Activated CD4-positive, alpha-beta memory T cell treated with anti-CD3 and anti-CD28 coated beads for 36 hours (primary cell): ENCODE measurements at regions of chr19 and their contacts with region 1.

Region 1: DNA sequence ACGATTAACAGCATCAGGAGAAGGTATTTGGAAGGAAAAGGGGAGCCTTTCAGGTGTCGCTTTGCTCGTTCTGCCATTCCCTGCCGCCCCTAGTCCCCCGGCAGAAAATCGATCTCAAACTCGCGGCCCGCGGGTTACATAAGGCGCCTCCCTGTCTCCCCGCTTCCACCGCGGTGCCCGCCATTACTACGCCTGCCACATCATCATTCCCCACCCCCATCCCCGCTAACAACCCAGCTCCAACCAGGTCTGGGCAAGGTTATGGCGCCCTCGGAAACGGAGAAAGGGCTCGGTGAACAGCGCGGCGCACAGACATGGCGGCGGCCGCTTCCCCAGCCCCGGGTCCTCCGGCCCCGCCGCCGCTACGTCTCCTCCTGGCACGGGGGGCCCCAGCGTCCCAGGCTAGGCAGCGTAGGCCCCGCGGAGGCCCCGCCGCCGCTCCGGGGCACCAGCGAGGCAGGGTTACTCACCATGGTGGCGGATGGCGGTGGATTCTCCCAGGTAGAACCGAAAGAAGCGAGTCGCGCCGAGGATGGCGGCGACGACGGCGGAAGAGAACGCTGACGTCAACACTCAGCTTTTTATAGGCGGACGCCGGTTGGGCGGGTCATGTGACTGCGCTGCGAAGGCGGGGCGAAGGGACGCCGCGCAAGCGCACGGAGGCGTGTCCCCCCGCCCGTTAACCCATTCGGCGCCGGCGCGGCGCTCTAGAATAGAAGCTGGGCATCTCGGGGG is at the start of gene EEF2:
- DNase-seq: peak; percentile 90
- H3K4me3 Mint-ChIP-seq: peak within 1 kb of the TSS; percentile 96
- H3K27ac Mint-ChIP-seq: peak within 1 kb of the TSS; percentile 95
- H3K4me1 Mint-ChIP-seq: peaks cover 37% of the 10 kb centered on the region
- H3K27me3 Mint-ChIP-seq: no peaks in the 10 kb centered on the region
- total RNA-seq, gene EEF2: 3,113 to 3,225 TPM

Region 2: GRCh38 chr19:3505598-3506383 is 479.3 kb before region 1 on chr19 and contains the start of gene FZR1:
- CTCF ChIA-PET with region 1: no interaction called
- POLR2A ChIA-PET with region 1: no interaction called
- intact Hi-C with region 1: loop called (anchors 5 kb)
- DNase-seq: peak; percentile 100
- H3K4me3 Mint-ChIP-seq: peak within 1 kb of the TSS; percentile 93
- H3K27ac Mint-ChIP-seq: peak within 1 kb of the TSS; percentile 93
- H3K4me1 Mint-ChIP-seq: peaks cover 43% of the 10 kb centered on the region
- H3K27me3 Mint-ChIP-seq: no peaks in the 10 kb centered on the region
- total RNA-seq, gene FZR1: 43.5 to 46.9 TPM

Region 3: GRCh38 chr19:3970808-3971598 is 14.1 kb before region 1 on chr19 and contains the start of gene DAPK3:
- CTCF ChIA-PET with region 1: interaction called, 26 read pairs
- POLR2A ChIA-PET with region 1: interaction called, 51 read pairs
- intact Hi-C with region 1: loop called (anchors 1 kb)
- DNase-seq: peak; percentile 97
- H3K4me3 Mint-ChIP-seq: peak within 1 kb of the TSS; percentile 85
- H3K27ac Mint-ChIP-seq: peak within 1 kb of the TSS; percentile 49
- H3K4me1 Mint-ChIP-seq: peaks cover 17% of the 10 kb centered on the region
- H3K27me3 Mint-ChIP-seq: no peaks in the 10 kb centered on the region
- total RNA-seq, gene DAPK3: 32.4 to 33.3 TPM

Region 4: DNA sequence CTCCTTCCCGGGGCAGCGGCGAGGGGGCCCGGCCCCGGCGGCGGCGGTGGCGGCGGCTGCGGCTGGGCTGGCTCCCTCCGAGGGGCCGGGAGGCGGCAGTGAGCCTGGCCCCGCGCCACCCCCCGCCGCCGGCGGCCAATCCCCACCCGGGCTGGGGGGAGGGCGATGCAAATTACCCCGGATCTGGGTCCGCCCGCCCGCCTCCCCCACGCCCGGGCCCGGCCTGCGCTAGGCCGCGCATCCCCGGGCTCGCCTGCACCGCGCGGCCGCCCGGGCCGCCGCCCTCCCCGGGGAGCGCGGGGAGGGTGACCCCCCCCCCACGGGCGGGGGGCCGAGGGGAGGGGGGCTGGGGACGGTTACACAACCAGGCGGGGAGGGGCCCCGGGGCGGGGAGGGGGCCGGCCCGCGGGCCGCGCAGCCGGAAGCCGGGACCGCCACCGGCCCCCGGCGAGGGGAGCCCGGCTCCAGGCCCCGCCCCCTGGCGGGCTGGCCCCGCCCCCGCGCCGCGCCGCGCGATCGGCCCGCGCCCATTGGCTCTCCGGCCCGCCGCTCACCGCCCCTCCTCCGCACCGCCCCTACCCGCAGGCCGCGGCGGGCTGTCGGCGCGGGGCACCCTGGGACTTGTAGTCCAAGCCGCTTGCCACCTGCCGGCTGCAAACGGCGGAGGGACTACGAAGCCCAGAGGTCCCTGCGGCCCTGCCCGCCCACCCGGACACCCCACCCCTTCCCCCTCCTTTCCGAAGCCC is 80.5 kb after region 1 on chr19:
- CTCF ChIA-PET with region 1: interaction called, 3 read pairs
- POLR2A ChIA-PET with region 1: interaction called, 4 read pairs
- intact Hi-C with region 1: loop called (anchors 2 kb)
- DNase-seq: peak; percentile 97
- H3K4me3 Mint-ChIP-seq: peak overlapping the region; percentile 57
- H3K27ac Mint-ChIP-seq: no peak overlapping the region
- H3K4me1 Mint-ChIP-seq: peaks cover 41% of the 10 kb centered on the region
- H3K27me3 Mint-ChIP-seq: no peaks in the 10 kb centered on the region

Region 5: DNA sequence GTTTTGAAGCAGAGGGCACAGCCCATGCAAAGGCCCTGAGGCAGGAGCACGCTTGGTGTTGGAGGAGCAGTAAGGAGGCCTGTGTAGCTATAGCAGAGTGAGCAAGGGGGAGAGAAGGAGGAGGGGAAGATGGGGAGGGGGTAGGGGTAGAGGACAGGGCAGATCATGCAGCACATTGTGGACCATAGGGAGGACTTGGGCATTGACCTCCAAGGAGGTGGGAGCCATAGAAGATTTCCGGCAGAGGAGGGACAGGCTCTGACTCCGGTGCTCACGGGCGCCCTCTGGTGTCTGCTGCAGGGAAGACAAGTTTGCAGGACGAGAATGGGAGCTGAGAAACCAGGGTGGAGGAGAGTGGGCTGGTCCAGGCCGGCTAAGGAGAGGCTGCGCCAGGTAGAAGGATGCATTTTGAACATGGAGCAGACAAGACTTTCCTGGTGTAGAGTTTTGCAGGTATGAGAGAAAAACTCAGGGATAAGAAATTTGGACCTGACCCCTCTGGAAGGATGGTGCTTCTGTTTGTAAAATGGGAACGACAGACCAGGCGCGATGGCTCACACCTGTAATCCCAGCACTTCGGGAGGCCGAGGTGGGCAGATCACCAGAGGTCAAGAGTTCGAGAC is 154.7 kb after region 1 on chr19:
- CTCF ChIA-PET with region 1: interaction called, 16 read pairs
- POLR2A ChIA-PET with region 1: interaction called, 3 read pairs
- intact Hi-C with region 1: loop called (anchors 1 kb)
- DNase-seq: peak; percentile 93
- H3K4me3 Mint-ChIP-seq: peak overlapping the region; percentile 9
- H3K27ac Mint-ChIP-seq: peak overlapping the region; percentile 3
- H3K4me1 Mint-ChIP-seq: peaks cover 8% of the 10 kb centered on the region
- H3K27me3 Mint-ChIP-seq: peaks cover 2% of the 10 kb centered on the region

Region 6: DNA sequence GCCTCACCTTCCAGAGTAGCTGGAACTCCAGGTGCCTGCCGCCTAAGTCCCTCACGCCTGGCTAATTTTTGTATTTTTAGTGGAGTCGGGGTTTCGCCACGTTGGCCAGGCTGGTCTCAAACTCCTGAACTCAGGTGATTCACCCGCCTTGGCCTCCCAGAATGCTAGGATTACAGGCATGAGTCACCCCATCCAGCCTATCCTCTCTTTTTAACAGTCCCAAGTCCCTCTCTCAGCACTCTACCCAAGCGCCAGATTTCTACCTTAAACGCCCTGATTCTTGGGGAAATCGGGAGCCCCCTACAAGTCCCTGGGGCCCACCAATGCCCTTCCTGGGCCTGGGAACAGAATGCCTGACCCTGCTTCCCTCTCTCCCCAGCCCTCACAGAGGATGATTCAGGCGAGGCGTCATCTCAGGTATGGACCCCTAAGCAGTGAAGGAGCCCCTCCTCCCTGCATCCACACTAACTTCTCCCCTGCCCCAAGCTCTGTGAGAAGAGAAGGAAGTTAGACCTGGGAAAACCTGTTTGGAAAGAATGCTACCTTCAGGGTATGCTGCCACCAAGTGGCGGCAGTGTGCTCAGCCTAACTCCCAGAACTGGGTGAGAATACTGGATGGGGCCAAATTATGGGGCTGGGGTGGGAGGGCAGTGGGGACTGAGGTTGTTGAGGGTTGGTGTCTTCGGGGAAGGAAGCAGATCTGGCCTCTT is 223.5 kb after region 1 on chr19:
- CTCF ChIA-PET with region 1: no interaction called
- POLR2A ChIA-PET with region 1: no interaction called
- intact Hi-C with region 1: loop called (anchors 1 kb)
- DNase-seq: no peak
- H3K4me3 Mint-ChIP-seq: no peak overlapping the region
- H3K27ac Mint-ChIP-seq: no peak overlapping the region
- H3K4me1 Mint-ChIP-seq: no peaks in the 10 kb centered on the region
- H3K27me3 Mint-ChIP-seq: no peaks in the 10 kb centered on the region